ENCODE measurements at regions of chr11 and their contacts with region 1.

Region 1: GRCh38 chr11:126268708-126269579 is at the starts of genes FOXRED1 and SRPRA:
- DNase-seq: peak; percentile 100
- ATAC-seq: peak; percentile 100
- total RNA-seq, gene FOXRED1: 31.6 TPM
- total RNA-seq, gene SRPRA: 64.5 TPM

Region 2: DNA sequence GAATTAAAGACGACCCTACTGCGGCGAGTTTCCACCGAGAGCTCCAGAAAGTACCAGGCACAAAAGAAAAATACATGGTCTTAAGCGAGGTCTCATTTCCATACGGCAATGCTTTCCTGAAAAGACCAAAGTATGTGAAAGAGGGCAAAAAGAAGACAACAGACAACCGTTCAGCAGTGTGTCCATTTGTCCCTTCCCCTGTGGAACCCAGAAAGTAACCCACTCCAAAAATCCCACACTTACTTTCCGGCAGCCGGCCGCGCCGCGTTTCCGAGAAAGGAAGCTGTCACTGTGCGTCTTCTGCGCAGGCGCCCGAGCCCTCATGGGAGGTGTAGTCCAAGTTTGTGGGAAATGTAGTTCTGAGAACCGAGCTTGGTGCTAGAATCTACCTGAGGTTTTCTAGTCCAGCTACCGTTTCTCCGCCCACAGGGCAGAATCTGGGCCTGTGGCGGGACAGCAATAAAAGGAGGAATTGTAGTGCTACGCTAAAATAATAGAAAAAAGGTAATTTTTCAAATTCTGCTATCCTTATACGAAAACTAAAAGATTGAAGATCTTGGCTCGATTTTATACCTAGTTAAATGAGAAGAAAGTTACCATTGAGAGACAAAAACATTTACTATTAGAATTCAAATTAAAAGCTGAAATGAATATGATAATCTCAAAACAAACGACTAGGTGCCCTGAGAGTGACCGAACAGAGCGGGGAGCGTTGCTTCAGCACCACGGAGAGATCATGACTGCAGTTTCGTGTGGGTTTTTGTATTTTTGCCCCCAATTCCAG is 365.8 kb before region 1 on chr11 and contains the start of gene PUS3:
- intact Hi-C with region 1: loop called (anchors 10 kb)
- DNase-seq: peak; percentile 96
- ATAC-seq: peak; percentile 95
- total RNA-seq, gene PUS3: 8.1 TPM

Region 3: DNA sequence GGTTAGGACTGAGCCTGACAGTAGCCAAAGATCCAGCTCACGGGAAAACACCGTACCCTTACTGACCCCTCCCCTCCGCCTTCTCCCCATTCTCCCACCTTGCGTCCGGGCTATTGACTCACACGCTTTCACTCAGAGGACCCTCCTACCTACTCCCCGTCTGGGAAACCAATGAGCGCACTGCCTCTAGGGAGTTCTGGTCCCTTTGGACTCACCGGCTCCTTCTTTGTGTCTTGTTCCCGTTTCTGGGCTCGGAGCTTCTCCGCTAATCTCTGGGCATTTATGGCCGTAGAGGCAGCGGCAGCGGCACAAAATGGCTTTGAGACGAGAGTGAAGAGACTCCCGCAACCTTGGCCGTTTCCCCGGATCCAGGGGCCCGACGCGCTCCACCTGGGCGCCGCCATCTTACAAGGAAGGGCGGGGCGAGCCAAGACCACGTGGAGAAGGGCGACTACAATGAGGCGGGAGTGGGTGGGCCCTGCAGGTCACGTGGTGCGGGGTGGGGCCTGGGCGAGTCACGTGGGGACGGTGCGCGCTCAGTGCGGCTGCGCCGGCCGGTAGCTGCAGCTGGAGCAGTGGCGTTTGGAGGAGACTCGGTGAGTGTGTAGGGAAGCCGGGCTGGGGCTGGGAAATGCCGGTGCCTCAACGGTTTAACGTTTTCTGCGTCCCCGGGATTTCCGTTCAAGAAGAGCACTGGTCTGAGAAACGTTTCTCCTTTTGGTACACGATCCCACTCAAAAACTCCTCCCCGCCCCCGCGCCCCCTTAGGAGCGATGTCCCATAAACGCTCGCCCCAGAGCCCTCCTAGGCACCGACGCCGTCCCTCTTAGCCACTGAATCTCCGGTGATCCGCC is 57.5 kb before region 1 on chr11 and contains the starts of genes FAM118B and RPUSD4:
- intact Hi-C with region 1: loop called (anchors 2 kb)
- DNase-seq: peak; percentile 100
- ATAC-seq: peak; percentile 99
- total RNA-seq, gene FAM118B: 25.6 TPM
- total RNA-seq, gene RPUSD4: 40.0 TPM

Region 4: GRCh38 chr11:126303623-126304456 is 34.9 kb after region 1 on chr11 and contains the start of gene DCPS:
- intact Hi-C with region 1: loop called (anchors 5 kb)
- DNase-seq: peak; percentile 97
- ATAC-seq: peak; percentile 99
- total RNA-seq, gene DCPS: 10.8 TPM

Region 5: DNA sequence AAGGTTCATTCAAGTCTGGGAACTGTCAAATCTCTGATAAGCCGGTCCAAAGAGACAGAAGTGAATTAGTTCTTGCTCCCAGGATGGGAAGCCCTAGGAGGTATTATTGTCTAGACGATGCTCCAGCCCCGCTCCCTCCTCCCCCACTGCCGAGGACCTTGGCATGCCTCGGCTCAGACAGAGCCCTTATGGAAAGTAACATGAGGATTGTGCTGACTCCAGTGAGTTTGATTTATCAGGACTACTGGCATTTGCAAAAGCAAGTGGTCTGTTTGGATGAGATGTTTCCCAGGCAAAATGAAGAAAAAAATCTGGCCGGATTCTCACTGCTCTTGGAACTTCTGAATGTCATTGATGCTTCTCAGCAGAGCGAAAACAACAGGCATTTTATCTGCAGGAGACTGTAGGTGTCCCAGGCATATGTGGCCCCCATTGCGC is 1977.4 kb after region 1 on chr11:
- intact Hi-C with region 1: no loop called
- DNase-seq: no peak
- ATAC-seq: peak; percentile 81

Measured in Right ventricle myocardium inferior (tissue), 1 donor.